Caco-2 (cell line): ENCODE measurements at regions of chr10 and their contacts with region 1.

Region 1: DNA sequence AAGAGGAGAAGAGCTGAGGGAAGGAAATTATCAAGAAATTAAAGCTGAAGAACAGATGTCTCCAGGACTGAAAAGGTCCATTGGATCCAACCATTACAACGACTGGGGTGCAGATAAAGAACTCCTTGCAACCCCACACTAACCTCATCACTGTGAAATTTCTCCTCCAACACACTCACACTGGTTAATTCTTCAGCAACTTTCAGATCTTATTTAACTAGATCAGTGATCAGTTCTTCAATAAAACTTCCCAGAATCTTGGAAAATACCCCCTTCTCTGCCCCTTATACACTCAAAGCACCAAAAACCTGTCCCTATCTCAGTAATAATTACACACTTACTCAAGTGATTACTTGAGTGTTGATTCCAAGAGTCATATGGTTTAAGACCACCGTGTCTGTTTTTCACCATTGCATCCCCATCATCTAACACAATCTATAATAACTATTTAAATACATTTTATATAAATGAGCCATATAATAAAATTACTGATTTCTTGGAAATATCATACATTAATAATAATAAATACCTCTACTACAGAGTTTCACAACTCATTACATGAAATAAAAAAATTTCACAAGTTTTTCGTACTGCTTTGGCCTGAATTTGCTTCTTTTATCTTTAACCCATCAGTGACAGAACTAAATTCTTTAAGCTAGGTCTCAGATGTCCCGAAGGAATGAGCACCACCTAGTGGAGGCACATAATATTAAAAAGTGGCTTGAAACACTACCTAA is 123.7 kb downstream of the MPP7 start:
- DNase-seq: peak in 1 of 2 experiments; percentile 69
- H3K4me3 ChIP-seq: no peak overlapping the region
- H3K4me3 Mint-ChIP-seq: no peak overlapping the region
- H3K27ac Mint-ChIP-seq: no peak overlapping the region
- H3K4me1 ChIP-seq: 0 out of 2 replicates have a peak, but pooled peaks cover 7% of the 10 kb centered on the region
- H3K4me1 Mint-ChIP-seq: peaks cover 22% of the 10 kb centered on the region
- H3K27me3 ChIP-seq: no peaks in the 10 kb centered on the region
- H3K27me3 Mint-ChIP-seq: no peaks in the 10 kb centered on the region
- CTCF ChIP-seq: peak; percentile 75 to 88

Region 2: DNA sequence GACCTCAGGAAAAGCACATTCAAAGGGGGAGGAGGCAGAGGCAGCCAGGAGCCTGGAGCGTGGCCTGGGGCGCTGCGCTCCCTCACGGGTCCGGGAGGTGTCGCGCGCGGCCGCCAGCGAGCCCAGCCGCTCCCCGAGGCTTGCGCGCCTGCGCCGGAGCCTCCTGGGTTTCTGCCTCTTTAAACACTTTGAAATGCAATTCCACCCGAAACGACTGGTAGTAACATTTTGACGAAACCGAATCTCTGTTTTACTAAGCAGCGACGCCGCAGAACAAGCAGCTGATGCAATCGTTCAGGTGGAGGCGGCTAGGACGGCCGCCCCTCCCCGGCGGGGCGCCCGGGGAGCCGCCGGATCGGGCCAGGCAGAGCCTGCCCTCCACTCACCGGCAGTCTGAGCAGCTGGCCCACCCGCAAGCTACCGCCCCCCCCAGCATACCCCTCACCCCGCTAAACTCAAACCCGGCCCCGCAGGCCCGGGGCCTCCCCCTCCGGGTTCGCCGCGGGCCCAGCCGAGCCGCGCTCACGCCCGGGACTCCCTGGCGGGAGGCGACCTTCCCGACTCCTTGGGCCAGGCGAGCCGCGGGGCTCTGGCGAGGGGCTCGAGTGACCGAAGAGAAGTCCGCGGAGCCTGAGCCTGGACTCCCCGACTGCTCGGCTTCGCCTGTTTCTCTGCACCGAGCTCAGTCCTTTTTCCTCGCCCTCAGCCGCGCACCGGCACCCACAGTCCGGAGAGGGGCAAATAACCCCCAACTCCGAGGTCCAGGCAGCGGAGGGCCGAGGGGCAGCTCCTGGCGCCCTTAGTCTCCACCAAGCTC is 436.8 kb before region 1 on chr10:
- CTCF ChIA-PET with region 1: interaction called, 3 read pairs
- POLR2A ChIA-PET with region 1: no interaction called
- intact Hi-C with region 1: loop called (anchors 2 kb)
- DNase-seq: peak; percentile 81 to 94
- H3K4me3 ChIP-seq: peak overlapping the region; percentile 75
- H3K4me3 Mint-ChIP-seq: peak overlapping the region; percentile 75
- H3K27ac Mint-ChIP-seq: no peak overlapping the region
- H3K4me1 ChIP-seq: peaks cover 25% of the 10 kb centered on the region
- H3K4me1 Mint-ChIP-seq: peaks cover 5% of the 10 kb centered on the region
- H3K27me3 ChIP-seq: peaks cover 11% of the 10 kb centered on the region
- H3K27me3 Mint-ChIP-seq: peaks cover 30% of the 10 kb centered on the region
- CTCF ChIP-seq: peak; percentile 78 to 86

Region 3: GRCh38 chr10:27783660-27784059 is 395.5 kb before region 1 on chr10:
- CTCF ChIA-PET with region 1: interaction called, 5 read pairs
- POLR2A ChIA-PET with region 1: no interaction called
- intact Hi-C with region 1: loop called (anchors 1 kb)
- DNase-seq: peak; percentile 51 to 52
- H3K4me3 ChIP-seq: no peak overlapping the region
- H3K4me3 Mint-ChIP-seq: no peak overlapping the region
- H3K27ac Mint-ChIP-seq: no peak overlapping the region
- H3K4me1 ChIP-seq: no peaks in the 10 kb centered on the region
- H3K4me1 Mint-ChIP-seq: no peaks in the 10 kb centered on the region
- H3K27me3 ChIP-seq: no peaks in the 10 kb centered on the region
- H3K27me3 Mint-ChIP-seq: peaks cover 39% of the 10 kb centered on the region
- CTCF ChIP-seq: peak; percentile 35 to 72

Region 4: DNA sequence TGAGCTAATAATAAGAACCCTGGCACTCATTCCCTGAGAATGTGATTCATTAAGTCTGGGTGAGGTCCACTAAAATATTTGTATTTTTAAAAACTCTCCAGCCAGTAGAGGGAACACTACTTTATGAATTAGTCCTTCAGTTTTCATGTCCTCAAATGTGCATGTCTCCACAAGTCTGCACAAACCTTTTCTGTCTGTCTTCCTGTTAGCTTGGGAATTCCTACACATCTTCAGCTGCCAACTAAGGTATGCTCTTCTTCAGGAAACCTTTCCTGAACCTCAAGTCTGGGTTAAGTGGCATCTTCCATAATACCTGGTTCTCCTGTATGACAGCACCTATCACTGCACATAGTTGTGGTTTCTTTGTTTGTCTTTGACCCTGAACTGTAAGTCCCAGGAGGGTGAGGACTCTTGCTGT is 313.9 kb before region 1 on chr10:
- CTCF ChIA-PET with region 1: no interaction called
- POLR2A ChIA-PET with region 1: no interaction called
- intact Hi-C with region 1: loop called (anchors 2 kb)
- DNase-seq: no peak
- H3K4me3 ChIP-seq: no peak overlapping the region
- H3K4me3 Mint-ChIP-seq: no peak overlapping the region
- H3K27ac Mint-ChIP-seq: no peak overlapping the region
- H3K4me1 ChIP-seq: no peaks in the 10 kb centered on the region
- H3K4me1 Mint-ChIP-seq: no peaks in the 10 kb centered on the region
- H3K27me3 ChIP-seq: no peaks in the 10 kb centered on the region
- H3K27me3 Mint-ChIP-seq: peaks cover 20% of the 10 kb centered on the region
- CTCF ChIP-seq: peak in 1 of 2 experiments; percentile 7